ENCODE measurements at regions of chr12 and their contacts with region 1.

Region 1: DNA sequence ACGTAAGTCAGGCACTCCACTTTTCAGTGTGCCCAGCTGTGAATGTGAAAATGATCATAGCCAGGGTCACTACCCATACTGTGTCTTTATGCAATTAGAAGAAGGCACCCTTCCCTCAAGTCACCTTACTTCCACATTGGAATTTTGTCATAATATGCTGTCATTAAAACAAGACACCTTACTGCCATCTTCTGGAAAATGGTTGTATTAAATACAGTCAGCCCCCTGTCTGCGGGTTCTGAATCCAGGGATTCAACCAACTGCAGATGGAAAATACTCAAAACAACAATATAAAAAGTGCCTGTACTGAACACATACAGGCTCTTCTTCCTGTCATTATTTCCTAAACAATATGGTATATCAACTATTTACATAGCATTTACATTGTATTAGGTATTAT is 70.2 kb upstream of the TBX5 start:
- DNase-seq: no peak

Region 2: GRCh38 chr12:114166362-114166761 is 309.8 kb before region 1 on chr12:
- intact Hi-C with region 1: loop called (anchors 1 kb)
- DNase-seq: no peak

Region 3: DNA sequence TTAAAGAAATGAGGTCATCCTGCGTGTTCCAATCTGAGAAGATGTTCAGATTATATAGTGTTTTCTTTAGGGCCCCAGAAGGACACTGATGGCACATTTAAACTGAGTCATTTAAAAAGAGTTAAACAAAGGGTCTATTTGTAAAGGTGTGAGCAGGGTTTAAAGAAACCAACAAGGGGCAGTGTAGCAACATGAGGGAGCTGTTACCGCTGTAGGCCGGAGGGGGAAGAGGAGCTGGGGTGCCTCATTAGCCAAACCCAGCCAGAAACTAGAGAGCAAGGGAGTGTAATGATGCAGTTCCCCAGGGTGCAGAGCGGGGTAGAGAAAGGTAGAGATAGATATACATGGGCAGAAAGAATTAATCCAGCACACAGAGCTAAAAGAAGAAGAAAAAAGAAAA is 230.6 kb before region 1 on chr12:
- intact Hi-C with region 1: loop called (anchors 10 kb)
- DNase-seq: no peak